IMR-90 (cell line): ENCODE measurements at regions of chr18 and their contacts with region 1.

Region 1: DNA sequence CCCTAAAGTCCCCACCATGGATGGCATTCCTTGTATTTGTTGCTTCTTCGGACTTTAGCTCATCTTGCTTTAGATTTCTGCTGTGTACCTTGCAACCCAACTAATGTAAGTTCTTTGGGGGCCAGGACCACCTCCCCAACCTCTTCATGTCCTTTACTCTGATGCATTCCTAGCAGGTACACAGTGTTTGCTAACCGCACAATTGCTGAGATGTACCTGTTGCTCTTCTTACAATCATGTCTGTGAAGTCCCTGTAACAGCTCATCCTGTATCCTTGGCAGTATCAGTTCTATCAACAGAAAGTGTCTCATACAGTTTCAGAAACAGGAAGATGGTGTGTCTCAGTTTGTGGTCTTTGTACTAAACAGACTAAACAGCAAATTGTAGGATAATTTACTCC is 24.1 kb downstream of the ST8SIA3 start:
- DNase-seq: no peak
- ATAC-seq: no peak
- H3K4me3 ChIP-seq: no peak overlapping the region
- H3K27ac ChIP-seq: no peak overlapping the region
- H3K4me1 ChIP-seq: no peaks in the 10 kb centered on the region
- H3K27me3 ChIP-seq: no peaks in the 10 kb centered on the region
- CTCF ChIP-seq: no peak
- POLR2A ChIP-seq: no peak
- RAD21 ChIP-seq: no peak

Region 2: DNA sequence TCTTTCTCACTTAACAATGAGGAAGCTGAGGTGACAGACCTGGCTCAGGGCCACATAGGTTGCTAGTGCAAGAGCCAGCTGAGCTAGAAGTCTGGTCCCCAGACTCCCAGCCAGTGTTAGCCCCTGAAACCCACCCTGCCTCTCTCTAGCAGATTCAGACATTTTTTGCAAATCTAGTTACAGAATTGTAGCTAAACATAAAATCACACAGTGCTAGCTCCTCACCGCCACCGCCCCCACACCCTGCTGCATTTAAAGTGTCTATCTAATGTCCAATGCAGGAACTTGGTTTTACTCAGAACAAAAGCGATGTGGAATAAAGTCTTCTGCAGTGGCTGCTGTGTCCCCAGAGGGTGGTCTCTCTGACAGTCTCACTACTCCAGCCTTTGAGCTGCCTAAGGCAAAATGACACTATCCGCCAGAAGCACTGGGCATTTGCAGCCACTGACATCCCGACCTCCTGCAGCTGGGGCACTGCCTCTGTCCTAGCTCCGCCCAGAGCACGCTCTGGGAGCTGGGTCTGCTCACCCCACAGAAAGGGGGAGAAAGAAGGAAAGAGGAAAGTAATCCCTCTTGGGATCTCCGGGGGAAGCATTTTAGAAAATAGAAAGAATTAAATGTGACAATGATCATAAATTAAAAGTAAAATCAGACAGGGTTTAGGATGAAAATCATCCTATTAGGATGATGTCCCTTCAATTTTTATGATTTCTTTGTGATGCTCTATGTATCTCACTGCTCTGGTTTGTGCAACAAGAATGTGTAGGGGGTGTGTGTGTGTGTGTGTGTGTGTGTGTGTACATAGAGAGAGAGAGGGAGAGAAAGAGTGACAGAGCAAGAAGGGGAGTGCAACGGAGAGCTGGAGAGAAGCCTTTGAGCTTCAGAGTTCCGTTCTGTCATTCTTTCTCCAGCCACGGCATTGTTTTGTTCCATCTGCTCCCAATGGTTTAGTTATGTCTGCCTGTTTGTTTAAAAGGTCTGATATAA is 74.6 kb before region 1 on chr18:
- CTCF ChIA-PET with region 1: no interaction called
- POLR2A ChIA-PET with region 1: no interaction called
- dilution Hi-C with region 1: no loop called
- in situ Hi-C with region 1: no loop called
- intact Hi-C with region 1: no loop called
- DNase-seq: no peak
- ATAC-seq: no peak
- H3K4me3 ChIP-seq: no peak overlapping the region
- H3K27ac ChIP-seq: no peak overlapping the region
- H3K4me1 ChIP-seq: no peaks in the 10 kb centered on the region
- H3K27me3 ChIP-seq: no peaks in the 10 kb centered on the region; the same call in 1 of the 2 replicates
- CTCF ChIP-seq: no peak
- POLR2A ChIP-seq: no peak
- RAD21 ChIP-seq: no peak

Region 3: GRCh38 chr18:57434536-57435494 is 58.3 kb after region 1 on chr18 and contains the start of gene ONECUT2:
- CTCF ChIA-PET with region 1: interaction called, 5 read pairs
- POLR2A ChIA-PET with region 1: interaction called, 10 read pairs
- dilution Hi-C with region 1: no loop called
- in situ Hi-C with region 1: no loop called
- intact Hi-C with region 1: no loop called
- DNase-seq: peak; percentile 85
- ATAC-seq: peak; percentile 100
- H3K4me3 ChIP-seq: peak within 1 kb of the TSS; percentile 42
- H3K27ac ChIP-seq: no peak within 1 kb of the TSS
- H3K4me1 ChIP-seq: no peaks in the 10 kb centered on the region
- H3K27me3 ChIP-seq: peaks cover 87% of the 10 kb centered on the region
- CTCF ChIP-seq: no peak
- POLR2A ChIP-seq: no peak
- RAD21 ChIP-seq: no peak
- total RNA-seq, gene ONECUT2: under 0.01 TPM in 2 replicates

Region 4: DNA sequence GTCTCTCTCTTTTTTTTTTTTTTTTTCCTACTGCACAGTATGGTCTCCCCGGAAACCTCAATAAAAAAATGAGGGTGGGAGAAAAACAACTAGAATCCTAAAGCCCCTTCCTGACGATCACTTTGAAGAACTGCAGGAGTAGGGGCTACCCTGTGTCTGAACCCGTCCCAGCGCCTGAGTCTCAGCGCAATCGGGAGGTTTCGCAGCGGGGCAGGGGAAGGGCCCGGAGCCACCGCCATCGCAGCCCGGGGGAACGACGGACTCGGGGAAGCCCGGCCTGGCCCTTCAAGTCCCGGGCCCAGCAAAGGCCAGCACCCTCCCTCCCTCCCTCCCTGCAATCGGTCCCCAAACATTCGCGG is 244.7 kb after region 1 on chr18:
- CTCF ChIA-PET with region 1: no interaction called
- POLR2A ChIA-PET with region 1: no interaction called
- dilution Hi-C with region 1: no loop called
- in situ Hi-C with region 1: no loop called
- intact Hi-C with region 1: no loop called
- DNase-seq: no peak
- ATAC-seq: peak; percentile 48
- H3K4me3 ChIP-seq: peak overlapping the region; percentile 83
- H3K27ac ChIP-seq: peak overlapping the region; percentile 96
- H3K4me1 ChIP-seq: peaks cover 2% of the 10 kb centered on the region
- H3K27me3 ChIP-seq: no peaks in the 10 kb centered on the region
- CTCF ChIP-seq: no peak
- POLR2A ChIP-seq: no peak
- RAD21 ChIP-seq: no peak

Region 5: GRCh38 chr18:57910817-57911216 is 534.3 kb after region 1 on chr18:
- CTCF ChIA-PET with region 1: no interaction called
- POLR2A ChIA-PET with region 1: no interaction called
- dilution Hi-C with region 1: no loop called
- in situ Hi-C with region 1: no loop called
- intact Hi-C with region 1: no loop called
- DNase-seq: no peak
- ATAC-seq: no peak
- H3K4me3 ChIP-seq: no peak overlapping the region
- H3K27ac ChIP-seq: no peak overlapping the region
- H3K4me1 ChIP-seq: peaks cover under 1% of the 10 kb centered on the region; the same call in 1 of the 2 replicates
- H3K27me3 ChIP-seq: peaks cover 16% of the 10 kb centered on the region
- CTCF ChIP-seq: 0 out of 2 replicates have a peak, but pooled peaks have one; percentile 3
- POLR2A ChIP-seq: no peak
- RAD21 ChIP-seq: no peak